SK-N-SH (cell line): ENCODE measurements at regions of chr18 and their contacts with region 1.

Region 1: GRCh38 chr18:4106407-4107033 is 348.6 kb downstream of the DLGAP1 start:
- DNase-seq: peak; percentile 34
- H3K4me3 ChIP-seq: peak overlapping the region; percentile 30 to 52; a peak in 3 of 4 replicates
- H3K27ac ChIP-seq: no peak overlapping the region
- H3K4me1 ChIP-seq: no peaks in the 10 kb centered on the region
- H3K27me3 ChIP-seq: no peaks in the 10 kb centered on the region
- CTCF ChIP-seq: peak; percentile 92
- EP300 ChIP-seq: no peak
- RAD21 ChIP-seq: peak; percentile 55

Region 2: GRCh38 chr18:4096486-4096885 is 10.0 kb before region 1 on chr18:
- CTCF ChIA-PET with region 1: interaction called, 48 read pairs
- POLR2A ChIA-PET with region 1: no interaction called
- DNase-seq: no peak
- H3K4me3 ChIP-seq: no peak overlapping the region
- H3K27ac ChIP-seq: no peak overlapping the region
- H3K4me1 ChIP-seq: no peaks in the 10 kb centered on the region
- H3K27me3 ChIP-seq: no peaks in the 10 kb centered on the region
- CTCF ChIP-seq: no peak
- EP300 ChIP-seq: no peak
- RAD21 ChIP-seq: no peak

Region 3: GRCh38 chr18:4119127-4119648 is 12.7 kb after region 1 on chr18:
- CTCF ChIA-PET with region 1: interaction called, 16 read pairs
- POLR2A ChIA-PET with region 1: no interaction called
- DNase-seq: no peak
- H3K4me3 ChIP-seq: no peak overlapping the region
- H3K27ac ChIP-seq: no peak overlapping the region
- H3K4me1 ChIP-seq: no peaks in the 10 kb centered on the region
- H3K27me3 ChIP-seq: no peaks in the 10 kb centered on the region
- CTCF ChIP-seq: no peak
- EP300 ChIP-seq: no peak
- RAD21 ChIP-seq: no peak

Region 4: DNA sequence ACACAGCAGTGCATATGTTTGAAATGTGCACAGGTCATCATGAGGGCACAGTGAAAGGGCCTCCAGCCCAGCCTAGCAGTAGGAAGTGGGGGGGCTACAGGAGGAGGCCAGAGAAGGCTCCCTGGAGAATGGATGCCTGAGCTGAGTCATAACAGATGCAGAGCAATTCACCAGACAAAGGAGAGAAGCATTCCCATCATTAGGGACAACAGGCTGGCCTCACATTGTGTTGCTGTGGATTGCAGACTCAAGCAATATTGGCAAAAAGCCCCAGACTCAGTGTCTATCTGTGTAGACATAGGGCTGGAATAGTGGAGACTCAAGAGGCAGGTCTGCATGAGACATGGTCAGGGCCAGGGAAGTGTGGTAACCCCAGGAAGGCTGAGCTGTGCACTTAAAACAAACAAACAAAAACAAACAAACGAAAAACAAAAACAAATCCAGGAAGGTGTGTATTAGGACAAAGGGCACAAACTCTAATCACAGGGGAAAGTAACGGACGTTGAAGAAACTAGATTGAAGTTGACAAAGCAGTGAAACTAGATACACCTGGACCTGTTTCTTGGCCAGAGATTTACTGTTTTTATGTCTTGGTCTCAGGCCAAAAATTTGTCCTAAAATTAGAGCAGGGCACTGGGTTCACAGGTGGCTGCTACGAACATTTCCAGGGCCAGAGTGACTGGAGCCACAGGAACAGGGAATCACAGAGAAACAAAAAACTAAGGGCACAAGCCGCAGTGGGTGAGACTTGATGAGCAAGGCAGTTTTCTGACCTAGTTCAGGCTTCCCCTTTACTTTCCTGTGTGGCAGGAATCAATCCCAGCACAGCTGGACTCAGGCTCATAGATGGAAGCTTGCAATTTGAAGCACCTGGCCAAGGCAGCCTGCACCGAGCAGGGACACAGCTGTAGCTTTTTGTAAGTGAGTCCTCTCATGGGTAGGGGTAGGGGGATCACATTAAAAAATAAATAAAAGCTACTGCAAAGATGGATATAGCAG is 19.0 kb after region 1 on chr18:
- CTCF ChIA-PET with region 1: interaction called, 16 read pairs
- POLR2A ChIA-PET with region 1: no interaction called
- DNase-seq: no peak
- H3K4me3 ChIP-seq: no peak overlapping the region
- H3K27ac ChIP-seq: no peak overlapping the region
- H3K4me1 ChIP-seq: no peaks in the 10 kb centered on the region; a peak in 1 of 4 replicates
- H3K27me3 ChIP-seq: no peaks in the 10 kb centered on the region
- CTCF ChIP-seq: no peak
- EP300 ChIP-seq: no peak
- RAD21 ChIP-seq: no peak

Region 5: DNA sequence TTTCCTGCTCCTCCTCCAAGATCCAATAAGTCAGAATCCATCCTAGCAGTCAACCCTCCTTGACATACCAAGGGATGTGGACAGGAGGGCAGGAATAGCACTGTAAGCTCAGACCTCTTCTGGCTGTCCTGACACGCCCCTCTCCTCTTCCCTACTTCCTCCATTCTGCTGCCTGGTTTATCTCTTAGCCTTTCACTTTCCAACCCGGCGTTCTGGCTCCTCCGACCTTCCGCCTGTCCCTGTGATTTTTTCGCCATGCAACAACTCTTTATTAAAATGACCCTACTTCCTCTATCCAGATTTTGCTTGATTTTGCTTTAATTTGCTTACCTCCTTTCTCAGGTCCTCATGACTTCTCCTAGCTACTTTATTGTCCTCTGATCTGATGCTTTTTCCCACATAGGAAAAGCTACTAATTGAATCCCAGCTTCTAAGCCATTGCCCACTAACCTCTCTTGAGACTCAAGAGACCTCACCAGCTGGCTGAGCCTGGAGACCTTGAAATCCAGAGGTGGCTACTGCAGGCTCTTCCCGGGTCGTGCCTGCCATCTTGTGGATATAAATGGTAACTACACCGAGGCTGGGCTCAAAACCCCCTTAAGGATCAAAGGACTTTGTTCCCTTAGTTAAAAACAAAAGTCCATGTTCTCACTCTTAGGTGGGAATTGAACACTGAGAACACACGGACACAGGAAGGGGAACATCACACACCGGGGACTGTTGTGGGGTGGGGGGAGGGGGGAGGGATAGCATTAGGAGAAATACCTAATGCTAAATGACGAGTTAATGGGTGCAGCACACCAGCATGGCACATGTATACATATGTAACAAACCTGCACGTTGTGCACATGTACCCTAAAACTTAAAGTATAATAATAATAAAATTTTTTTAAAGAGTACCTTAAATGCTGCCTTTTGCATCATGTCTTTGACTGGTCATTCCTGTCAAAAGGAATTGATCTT is 951.1 kb after region 1 on chr18:
- CTCF ChIA-PET with region 1: interaction called, 47 read pairs
- POLR2A ChIA-PET with region 1: no interaction called
- DNase-seq: peak; percentile 51
- H3K4me3 ChIP-seq: no peak overlapping the region; a peak in 1 of 4 replicates
- H3K27ac ChIP-seq: no peak overlapping the region
- H3K4me1 ChIP-seq: no peaks in the 10 kb centered on the region
- H3K27me3 ChIP-seq: no peaks in the 10 kb centered on the region
- CTCF ChIP-seq: peak; percentile 78
- EP300 ChIP-seq: no peak
- RAD21 ChIP-seq: peak; percentile 81